WTC11 (cell line): ENCODE measurements at regions of chr15 and their contacts with region 1.

Region 1: GRCh38 chr15:91852741-91853510 is 582 bp upstream of the SLCO3A1 start:
- DNase-seq: peak; percentile 69
- ATAC-seq: peak; percentile 62
- H3K4me3 Mint-ChIP-seq: peak overlapping the region; percentile 71
- H3K27ac Mint-ChIP-seq: no peak overlapping the region
- H3K4me1 Mint-ChIP-seq: peaks cover 40% of the 10 kb centered on the region
- H3K27me3 Mint-ChIP-seq: peaks cover 24% of the 10 kb centered on the region
- CTCF ChIP-seq: peak; percentile 85

Region 2: DNA sequence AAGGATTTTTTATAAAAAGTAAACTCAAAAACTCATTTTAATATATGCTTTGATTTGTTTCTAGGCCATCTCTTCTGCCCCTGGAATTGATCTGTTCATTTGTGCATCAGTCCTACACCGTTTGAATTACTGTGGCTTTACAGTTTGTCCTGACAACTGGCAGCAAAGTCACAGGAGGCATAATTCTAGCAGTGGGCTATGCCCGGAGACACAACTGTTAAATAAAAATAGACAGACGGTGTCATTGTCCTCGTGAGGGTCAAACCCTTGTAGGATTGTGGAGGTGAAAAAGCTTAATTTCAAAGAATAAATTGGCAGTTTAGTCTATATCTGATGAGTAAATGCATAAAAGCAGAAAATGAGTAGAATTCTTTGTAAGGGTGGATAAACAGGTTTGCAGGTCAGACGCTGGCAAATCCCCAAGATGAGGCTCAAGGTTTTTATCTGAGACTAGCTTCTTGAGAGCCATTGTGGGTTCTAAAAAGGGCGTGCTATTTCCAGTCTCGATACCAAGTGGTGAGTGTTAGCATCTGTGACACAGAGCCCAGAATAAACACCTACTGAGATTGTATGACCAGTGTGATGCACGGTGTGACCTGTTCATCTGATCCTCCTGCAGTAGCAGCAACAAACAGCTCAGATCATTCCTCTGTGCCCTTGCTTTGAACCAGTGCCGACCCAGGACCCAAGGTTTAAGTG is 50.9 kb before region 1 on chr15:
- CTCF ChIA-PET with region 1: no interaction called
- POLR2A ChIA-PET with region 1: no interaction called
- DNase-seq: no peak
- ATAC-seq: no peak
- H3K4me3 Mint-ChIP-seq: no peak overlapping the region
- H3K27ac Mint-ChIP-seq: no peak overlapping the region
- H3K4me1 Mint-ChIP-seq: no peaks in the 10 kb centered on the region
- H3K27me3 Mint-ChIP-seq: no peaks in the 10 kb centered on the region; the same call in 1 of the 2 replicates
- CTCF ChIP-seq: no peak

Region 3: DNA sequence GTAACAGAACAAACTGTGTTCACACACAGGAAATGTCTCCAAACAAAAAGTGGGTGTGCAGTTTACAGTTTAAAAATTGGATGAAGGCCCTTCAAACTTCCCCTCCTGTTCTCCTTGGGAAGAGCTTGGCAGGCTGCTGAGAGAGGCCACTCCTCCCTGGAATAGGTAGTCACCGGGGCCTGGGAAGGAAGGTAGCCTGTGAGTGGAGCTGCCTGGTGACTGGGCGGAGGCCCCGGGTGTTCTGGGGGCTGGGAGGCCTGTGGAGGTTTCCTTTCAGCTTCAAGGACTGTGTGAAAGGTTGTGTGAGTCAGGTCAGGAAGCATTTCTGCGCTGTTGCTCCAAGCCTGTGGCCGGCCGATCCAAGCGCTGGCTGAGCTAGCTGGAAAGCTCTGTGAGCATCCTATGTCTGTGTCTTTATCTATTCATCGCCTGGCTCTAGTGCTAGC is 14.7 kb after region 1 on chr15:
- CTCF ChIA-PET with region 1: interaction called, 32 read pairs
- POLR2A ChIA-PET with region 1: interaction called, 9 read pairs
- DNase-seq: peak; percentile 28
- ATAC-seq: peak; percentile 81
- H3K4me3 Mint-ChIP-seq: no peak overlapping the region
- H3K27ac Mint-ChIP-seq: no peak overlapping the region
- H3K4me1 Mint-ChIP-seq: peaks cover 34% of the 10 kb centered on the region
- H3K27me3 Mint-ChIP-seq: no peaks in the 10 kb centered on the region
- CTCF ChIP-seq: no peak

Region 4: GRCh38 chr15:91942676-91943576 is 90.0 kb after region 1 on chr15:
- CTCF ChIA-PET with region 1: interaction called, 14 read pairs
- POLR2A ChIA-PET with region 1: no interaction called
- DNase-seq: no peak
- ATAC-seq: no peak
- H3K4me3 Mint-ChIP-seq: no peak overlapping the region
- H3K27ac Mint-ChIP-seq: no peak overlapping the region
- H3K4me1 Mint-ChIP-seq: peaks cover 58% of the 10 kb centered on the region
- H3K27me3 Mint-ChIP-seq: no peaks in the 10 kb centered on the region
- CTCF ChIP-seq: no peak

Region 5: GRCh38 chr15:91947683-91948608 is 95.0 kb after region 1 on chr15:
- CTCF ChIA-PET with region 1: interaction called, 14 read pairs
- POLR2A ChIA-PET with region 1: no interaction called
- DNase-seq: peak; percentile 37
- ATAC-seq: peak; percentile 63
- H3K4me3 Mint-ChIP-seq: peak overlapping the region; percentile 8; the same call in 1 of the 2 replicates
- H3K27ac Mint-ChIP-seq: peak overlapping the region; percentile 85
- H3K4me1 Mint-ChIP-seq: peaks cover 60% of the 10 kb centered on the region
- H3K27me3 Mint-ChIP-seq: no peaks in the 10 kb centered on the region
- CTCF ChIP-seq: no peak